ENCODE measurements at regions of chr2 and their contacts with region 1.

Region 1: GRCh38 chr2:218155953-218156479 is 10.7 kb downstream of the CXCR1 start:
- H3K4me3 ChIP-seq: no peak overlapping the region
- H3K27ac ChIP-seq: no peak overlapping the region
- H3K4me1 ChIP-seq: no peaks in the 10 kb centered on the region
- CTCF ChIP-seq: no peak

Region 2: DNA sequence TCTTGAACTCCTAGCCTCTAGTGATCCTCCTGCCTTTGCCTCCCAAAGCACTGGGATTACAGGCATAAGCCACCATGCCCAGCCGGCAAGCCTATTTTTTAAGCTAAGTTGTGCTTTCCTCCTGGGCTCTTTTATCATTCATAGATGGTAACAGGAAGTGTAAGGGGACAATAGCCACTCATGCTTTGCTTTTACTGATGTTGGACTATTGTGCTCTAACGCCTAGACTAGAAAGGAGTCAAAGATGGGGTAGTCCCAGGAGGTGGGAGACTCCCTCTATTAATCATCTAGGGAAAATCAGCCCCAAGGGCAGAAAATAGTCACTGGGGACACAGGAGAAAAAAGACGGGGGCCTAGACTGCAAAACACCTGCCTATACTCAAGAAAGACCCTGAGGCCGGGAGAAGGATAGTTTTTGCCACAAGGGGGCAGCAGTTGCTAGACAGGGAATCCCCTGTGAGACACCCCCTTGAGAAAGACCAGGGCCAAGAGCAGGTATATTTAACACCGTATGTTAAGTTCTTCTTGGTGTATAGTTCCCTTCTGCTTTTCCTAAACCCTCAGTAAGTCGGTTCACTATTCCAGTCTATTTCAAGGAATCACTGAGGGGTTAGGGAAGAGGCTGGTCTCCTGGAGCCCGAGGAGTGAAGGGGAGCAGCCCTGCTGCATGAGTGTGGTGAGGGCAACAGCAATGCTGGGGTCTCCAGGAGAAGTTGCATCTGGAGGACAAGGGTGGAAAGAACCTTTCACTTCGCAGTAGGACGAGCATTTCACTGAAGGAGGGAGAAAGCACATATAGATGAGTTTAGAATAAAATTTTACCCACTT is 12.8 kb after region 1 on chr2:
- CTCF ChIA-PET with region 1: interaction called, 13 read pairs
- POLR2A ChIA-PET with region 1: no interaction called
- H3K4me3 ChIP-seq: no peak overlapping the region
- H3K27ac ChIP-seq: no peak overlapping the region
- H3K4me1 ChIP-seq: no peaks in the 10 kb centered on the region
- CTCF ChIP-seq: peak; percentile 20; the same call in 1 of the 2 replicates

Measured in HEK293 (cell line).